Activated CD4-positive, alpha-beta memory T cell treated with anti-CD3 and anti-CD28 coated beads for 36 hours (primary cell): ENCODE measurements at regions of chr1 and their contacts with region 1.

Region 1: GRCh38 chr1:198681831-198682759 is 43.3 kb downstream of the PTPRC start:
- DNase-seq: peak; percentile 89
- H3K4me3 Mint-ChIP-seq: peak overlapping the region; percentile 48
- H3K27ac Mint-ChIP-seq: peak overlapping the region; percentile 95
- H3K4me1 Mint-ChIP-seq: peaks cover 84% of the 10 kb centered on the region
- H3K27me3 Mint-ChIP-seq: no peaks in the 10 kb centered on the region

Region 2: GRCh38 chr1:197902454-197903195 is 779.5 kb before region 1 on chr1 and contains the start of gene C1orf53:
- CTCF ChIA-PET with region 1: no interaction called
- POLR2A ChIA-PET with region 1: no interaction called
- intact Hi-C with region 1: loop called (anchors 10 kb)
- DNase-seq: peak; percentile 85
- H3K4me3 Mint-ChIP-seq: peak within 1 kb of the TSS; percentile 77
- H3K27ac Mint-ChIP-seq: peak within 1 kb of the TSS; percentile 50
- H3K4me1 Mint-ChIP-seq: peaks cover 9% of the 10 kb centered on the region
- H3K27me3 Mint-ChIP-seq: peaks cover 41% of the 10 kb centered on the region
- total RNA-seq, gene C1orf53: 0.40 to 0.58 TPM

Region 3: GRCh38 chr1:198167436-198167934 is 514.6 kb before region 1 on chr1:
- CTCF ChIA-PET with region 1: no interaction called
- POLR2A ChIA-PET with region 1: no interaction called
- intact Hi-C with region 1: loop called (anchors 2 kb)
- DNase-seq: peak; percentile 33
- H3K4me3 Mint-ChIP-seq: peak overlapping the region; percentile 48
- H3K27ac Mint-ChIP-seq: peak overlapping the region; percentile 92
- H3K4me1 Mint-ChIP-seq: peaks cover 82% of the 10 kb centered on the region
- H3K27me3 Mint-ChIP-seq: no peaks in the 10 kb centered on the region

Region 4: GRCh38 chr1:198638894-198639635 is 43.0 kb before region 1 on chr1 and contains the start of gene PTPRC:
- CTCF ChIA-PET with region 1: interaction called, 7 read pairs
- POLR2A ChIA-PET with region 1: interaction called, 62 read pairs
- intact Hi-C with region 1: loop called (anchors 1 kb)
- DNase-seq: no peak
- H3K4me3 Mint-ChIP-seq: peak within 1 kb of the TSS; percentile 89
- H3K27ac Mint-ChIP-seq: peak within 1 kb of the TSS; percentile 98
- H3K4me1 Mint-ChIP-seq: peaks cover 47% of the 10 kb centered on the region
- H3K27me3 Mint-ChIP-seq: no peaks in the 10 kb centered on the region
- total RNA-seq, gene PTPRC: 495 to 503 TPM

Region 5: GRCh38 chr1:198657550-198658064 is 24.5 kb before region 1 on chr1:
- CTCF ChIA-PET with region 1: interaction called, 5 read pairs
- POLR2A ChIA-PET with region 1: interaction called, 114 read pairs
- intact Hi-C with region 1: loop called (anchors 1 kb)
- DNase-seq: no peak
- H3K4me3 Mint-ChIP-seq: peak overlapping the region; percentile 74
- H3K27ac Mint-ChIP-seq: peak overlapping the region; percentile 97
- H3K4me1 Mint-ChIP-seq: peaks cover 65% of the 10 kb centered on the region
- H3K27me3 Mint-ChIP-seq: no peaks in the 10 kb centered on the region

Region 6: DNA sequence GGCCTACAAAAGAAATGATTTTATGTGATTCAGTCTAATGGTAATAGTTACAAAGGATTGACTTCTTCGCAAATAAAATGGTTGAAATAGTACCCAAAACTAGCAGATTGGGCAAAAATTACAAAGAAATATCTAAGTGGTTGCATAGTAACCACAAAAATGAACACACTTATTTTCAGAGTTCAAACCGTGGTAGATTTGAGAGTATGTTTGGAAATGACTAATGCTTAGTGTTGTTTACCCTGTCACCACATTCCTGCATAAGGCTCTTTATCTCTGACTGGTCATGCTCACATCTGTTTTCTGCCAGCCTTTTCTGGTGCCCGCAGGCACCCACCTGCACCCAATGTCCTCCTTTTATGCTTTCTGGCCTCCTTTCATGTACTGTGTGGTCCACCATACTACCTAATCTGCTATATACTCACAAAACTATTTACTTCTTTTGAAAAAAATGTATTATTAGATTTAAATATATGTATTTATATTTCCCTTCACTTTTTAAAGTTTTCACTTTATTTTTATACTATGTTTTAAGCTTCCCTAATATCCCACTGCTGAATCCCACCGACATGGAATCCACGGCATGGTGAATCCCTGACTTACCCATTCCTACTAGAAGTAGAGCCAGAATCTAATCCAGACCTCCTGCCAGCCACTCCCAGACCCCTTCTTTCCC is 12.9 kb before region 1 on chr1:
- CTCF ChIA-PET with region 1: interaction called, 8 read pairs
- POLR2A ChIA-PET with region 1: interaction called, 21 read pairs
- intact Hi-C with region 1: loop called (anchors 1 kb)
- DNase-seq: peak; percentile 65
- H3K4me3 Mint-ChIP-seq: peak overlapping the region; percentile 63
- H3K27ac Mint-ChIP-seq: peak overlapping the region; percentile 96
- H3K4me1 Mint-ChIP-seq: peaks cover 92% of the 10 kb centered on the region
- H3K27me3 Mint-ChIP-seq: no peaks in the 10 kb centered on the region